ENCODE measurements at regions of chr16 and their contacts with region 1.

Region 1: GRCh38 chr16:66207139-66207882 is 159.2 kb upstream of the CDH5 start:
- H3K4me3 ChIP-seq: no peak overlapping the region
- H3K27ac ChIP-seq: no peak overlapping the region
- H3K4me1 ChIP-seq: no peaks in the 10 kb centered on the region
- CTCF ChIP-seq: no peak

Region 2: GRCh38 chr16:66159987-66160386 is 47.3 kb before region 1 on chr16:
- CTCF ChIA-PET with region 1: no interaction called
- POLR2A ChIA-PET with region 1: no interaction called
- H3K4me3 ChIP-seq: no peak overlapping the region
- H3K27ac ChIP-seq: no peak overlapping the region
- H3K4me1 ChIP-seq: no peaks in the 10 kb centered on the region
- CTCF ChIP-seq: no peak

Region 3: GRCh38 chr16:66175636-66176035 is 31.7 kb before region 1 on chr16:
- CTCF ChIA-PET with region 1: interaction called, 10 read pairs
- POLR2A ChIA-PET with region 1: no interaction called
- H3K4me3 ChIP-seq: no peak overlapping the region
- H3K27ac ChIP-seq: no peak overlapping the region
- H3K4me1 ChIP-seq: no peaks in the 10 kb centered on the region
- CTCF ChIP-seq: no peak